Mucosa of descending colon (tissue), 3 donors: ENCODE measurements at regions of chr7 and their contacts with region 1.

Region 1: DNA sequence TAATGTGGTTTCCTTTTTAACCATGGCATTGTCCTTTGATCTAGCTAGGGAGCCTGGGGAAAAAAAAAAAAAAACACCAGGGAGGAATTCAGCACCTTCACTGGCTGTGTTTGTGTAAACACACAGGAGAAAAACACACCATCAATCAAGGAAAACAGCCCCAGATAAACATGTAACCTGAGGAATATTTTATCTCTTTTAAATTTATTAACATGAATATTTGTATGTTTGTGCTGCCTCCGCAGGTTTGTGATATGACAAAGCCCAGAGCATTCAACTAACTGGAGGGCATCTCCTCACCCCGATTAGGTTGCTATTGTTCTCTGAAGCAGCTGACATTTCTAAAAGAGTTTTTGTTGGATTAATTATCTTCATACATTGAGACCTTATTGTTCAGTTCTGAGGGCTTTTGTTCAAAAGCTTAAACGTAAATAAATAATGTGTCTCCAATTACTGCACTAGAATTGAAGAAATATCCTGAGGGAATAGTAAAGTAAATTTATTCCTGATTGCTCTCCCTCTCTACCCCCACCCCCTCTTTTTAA is 89.4 kb upstream of the SEMA3E start:
- DNase-seq: no peak
- ATAC-seq: no peak
- H3K4me3 ChIP-seq: no peak overlapping the region
- H3K4me1 ChIP-seq: no peaks in the 10 kb centered on the region
- CTCF ChIP-seq: no peak

Region 2: GRCh38 chr7:83786858-83787257 is 48.5 kb after region 1 on chr7:
- intact Hi-C with region 1: loop called in 1 of 2 experiments (anchors 5 kb)
- DNase-seq: no peak
- ATAC-seq: no peak
- H3K4me3 ChIP-seq: no peak overlapping the region
- H3K4me1 ChIP-seq: no peaks in the 10 kb centered on the region
- CTCF ChIP-seq: no peak